HEK293 (cell line): ENCODE measurements at regions of chr18 and their contacts with region 1.

Region 1: GRCh38 chr18:47756364-47757016 is 174.0 kb downstream of the SMAD2 start:
- H3K4me3 ChIP-seq: no peak overlapping the region
- H3K27ac ChIP-seq: no peak overlapping the region
- H3K4me1 ChIP-seq: no peaks in the 10 kb centered on the region
- CTCF ChIP-seq: peak; percentile 72; the same call in 1 of the 2 replicates

Region 2: DNA sequence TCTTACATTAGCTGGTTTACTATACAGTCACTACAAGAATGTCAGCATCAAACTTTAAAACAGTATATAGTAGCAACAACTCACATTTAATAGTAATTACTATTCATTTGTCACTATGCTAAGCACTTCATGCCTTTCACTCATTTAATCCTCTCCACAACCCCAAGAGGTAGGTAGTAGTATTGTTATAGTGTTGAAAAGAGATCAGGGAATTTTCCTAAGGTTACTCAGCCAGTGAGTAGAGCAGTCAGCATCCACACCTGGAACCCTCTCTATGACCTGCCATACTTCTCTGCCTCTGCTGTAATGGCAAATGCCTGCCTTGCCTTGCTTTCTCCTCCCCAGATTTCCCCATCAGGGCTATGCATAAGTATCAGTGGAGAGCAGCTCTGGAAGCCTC is 529.8 kb before region 1 on chr18:
- CTCF ChIA-PET with region 1: interaction called, 10 read pairs
- POLR2A ChIA-PET with region 1: no interaction called
- H3K4me3 ChIP-seq: no peak overlapping the region
- H3K27ac ChIP-seq: no peak overlapping the region
- H3K4me1 ChIP-seq: no peaks in the 10 kb centered on the region
- CTCF ChIP-seq: no peak

Region 3: DNA sequence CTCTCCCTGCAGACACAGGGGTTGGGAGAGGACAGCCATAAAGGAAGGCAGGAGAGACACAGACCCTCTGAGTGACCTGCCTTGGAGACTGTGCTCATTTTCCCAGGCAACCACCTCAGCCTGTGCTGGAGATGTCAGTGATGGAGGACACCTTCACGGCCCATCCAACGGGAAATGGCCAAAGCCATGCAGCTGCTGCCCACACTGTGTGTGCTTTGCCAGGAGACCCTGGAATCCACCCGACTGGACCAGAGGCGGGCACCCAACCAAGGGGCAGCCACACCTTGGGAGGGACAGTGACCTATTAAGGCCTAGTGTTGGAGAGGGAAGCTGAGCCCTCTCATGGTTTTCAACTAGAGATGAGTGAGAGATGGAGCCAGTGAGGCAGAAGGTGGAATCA is 18.5 kb before region 1 on chr18:
- CTCF ChIA-PET with region 1: interaction called, 23 read pairs
- POLR2A ChIA-PET with region 1: no interaction called
- H3K4me3 ChIP-seq: no peak overlapping the region
- H3K27ac ChIP-seq: no peak overlapping the region
- H3K4me1 ChIP-seq: no peaks in the 10 kb centered on the region
- CTCF ChIP-seq: no peak

Region 4: DNA sequence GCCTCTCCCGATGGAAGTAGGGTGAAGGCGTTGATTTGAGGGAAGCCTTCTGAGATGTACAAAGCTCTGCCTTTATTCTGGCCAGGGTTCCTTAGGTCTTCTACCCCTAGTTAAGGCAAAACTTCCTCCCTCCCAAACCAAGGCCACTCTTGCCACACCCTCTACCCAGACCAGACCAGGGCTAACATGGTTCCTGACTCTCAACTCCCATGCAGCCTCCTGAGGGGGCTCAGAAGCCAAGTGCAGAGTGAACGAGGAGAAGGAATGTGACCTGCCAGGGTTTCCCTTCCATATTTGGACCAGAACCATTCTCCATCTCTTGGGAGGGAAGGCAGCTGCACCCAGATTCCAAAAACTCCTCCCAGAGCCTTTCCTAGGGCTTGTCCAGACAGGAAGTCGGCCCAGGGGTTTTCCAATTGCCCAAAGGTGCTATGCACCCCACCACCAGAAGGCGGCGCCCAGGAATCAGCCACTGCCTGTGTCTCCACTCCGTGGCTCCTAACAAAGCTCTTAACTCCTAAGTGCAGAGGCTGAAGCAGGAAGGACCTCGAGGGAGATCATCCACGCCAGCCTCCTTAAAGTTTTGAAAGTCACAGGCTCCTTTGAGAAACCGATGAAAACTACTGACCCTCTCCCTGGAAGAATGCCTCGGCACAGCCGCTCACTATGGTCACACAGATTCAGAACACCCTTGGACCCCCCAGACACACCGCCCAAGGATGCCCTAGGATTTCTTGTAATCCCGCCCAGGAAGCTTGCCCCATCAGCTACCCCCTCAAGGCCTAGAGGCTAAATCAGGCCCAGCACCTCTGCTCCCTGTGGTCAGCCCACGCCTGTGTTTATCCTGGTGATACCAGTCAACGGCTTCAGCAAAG is 16.1 kb after region 1 on chr18:
- CTCF ChIA-PET with region 1: interaction called, 37 read pairs
- POLR2A ChIA-PET with region 1: no interaction called
- H3K4me3 ChIP-seq: no peak overlapping the region
- H3K27ac ChIP-seq: no peak overlapping the region
- H3K4me1 ChIP-seq: no peaks in the 10 kb centered on the region
- CTCF ChIP-seq: peak; percentile 52; the same call in 1 of the 2 replicates